OCI-LY7 (cell line): ENCODE measurements at regions of chr2 and their contacts with region 1.

Region 1: DNA sequence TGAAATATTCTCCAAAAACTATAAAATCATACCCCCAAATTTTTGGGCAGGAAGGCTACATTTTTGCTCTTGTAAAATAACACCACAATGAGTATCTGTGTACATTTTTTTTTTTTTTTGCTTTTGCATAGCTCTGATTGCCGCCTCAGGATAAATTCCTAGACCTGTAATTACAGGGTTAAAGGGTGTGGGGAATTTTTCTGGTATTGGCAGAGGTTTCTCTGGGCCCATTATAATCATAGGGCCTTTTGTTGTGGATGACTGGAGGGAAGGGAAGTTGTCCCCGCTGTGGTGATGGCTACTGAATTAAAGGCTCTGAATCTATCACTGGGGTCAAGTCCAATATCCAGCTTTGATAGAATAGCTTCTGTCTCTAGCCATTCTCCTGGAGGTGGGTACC is 26.6 kb downstream of the CCDC195 start:
- DNase-seq: no peak
- H3K4me3 ChIP-seq: no peak overlapping the region
- H3K27ac ChIP-seq: no peak overlapping the region
- H3K4me1 ChIP-seq: no peaks in the 10 kb centered on the region
- CTCF ChIP-seq: no peak

Region 2: DNA sequence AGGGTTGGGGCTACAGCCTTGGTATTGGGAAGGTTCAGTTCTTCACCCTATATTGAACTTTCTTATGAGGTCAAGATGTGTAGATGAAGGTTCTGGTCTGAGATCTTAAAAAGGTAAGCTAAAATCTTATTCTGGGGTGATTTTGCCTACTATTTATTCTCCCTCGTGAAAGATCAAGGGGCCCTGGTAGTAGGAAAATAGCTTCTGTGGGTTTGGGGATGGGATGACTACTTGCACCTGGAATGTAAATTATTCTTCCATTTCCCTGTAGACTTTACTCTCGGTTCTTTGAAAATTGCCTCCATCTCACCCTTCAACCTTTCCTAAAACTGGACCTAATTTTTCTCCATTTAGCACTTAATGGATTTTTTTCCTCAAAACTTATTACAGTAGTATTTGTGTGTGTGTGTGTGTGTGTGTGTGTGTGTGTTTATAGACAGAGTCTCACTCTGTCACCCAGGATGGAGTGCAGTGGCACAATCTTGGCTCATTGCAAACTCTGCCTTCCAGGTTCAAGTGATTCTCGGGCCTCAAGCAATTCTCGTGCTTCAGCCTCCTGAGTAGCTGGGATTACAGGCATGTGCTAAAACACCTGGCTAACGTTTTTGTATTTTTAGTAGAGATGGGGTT is 10.8 kb before region 1 on chr2:
- CTCF ChIA-PET with region 1: no interaction called
- POLR2A ChIA-PET with region 1: interaction called, 13 read pairs
- intact Hi-C with region 1: no loop called
- DNase-seq: no peak
- H3K4me3 ChIP-seq: peak overlapping the region; percentile 23
- H3K27ac ChIP-seq: peak overlapping the region; percentile 17
- H3K4me1 ChIP-seq: peaks cover 18% of the 10 kb centered on the region
- CTCF ChIP-seq: no peak

Region 3: GRCh38 chr2:224816816-224817215 is 127.3 kb after region 1 on chr2:
- CTCF ChIA-PET with region 1: no interaction called
- POLR2A ChIA-PET with region 1: no interaction called
- intact Hi-C with region 1: no loop called
- DNase-seq: no peak
- H3K4me3 ChIP-seq: no peak overlapping the region
- H3K27ac ChIP-seq: no peak overlapping the region
- H3K4me1 ChIP-seq: no peaks in the 10 kb centered on the region
- CTCF ChIP-seq: no peak